K562 (cell line): ENCODE measurements at regions of chr3 and their contacts with region 1.

Region 1: GRCh38 chr3:184040010-184040409 is 8.5 kb downstream of the HTR3D start:
- DNase-seq: peak; percentile 22 to 53 (median 34)
- ATAC-seq: peak; percentile 94
- H3K4me3 ChIP-seq: no peak overlapping the region
- H3K27ac ChIP-seq: no peak overlapping the region
- H3K4me1 ChIP-seq: no peaks in the 10 kb centered on the region
- H3K27me3 ChIP-seq: peaks cover 0 to 5% of the 10 kb centered on the region in 2 experiments; a peak in 2 of 5 replicates
- CTCF ChIP-seq: peak; percentile 66 to 79 (median 68)
- EP300 ChIP-seq: no peak
- POLR2A ChIP-seq: no peak
- RAD21 ChIP-seq: peak; percentile 79 to 82

Region 2: DNA sequence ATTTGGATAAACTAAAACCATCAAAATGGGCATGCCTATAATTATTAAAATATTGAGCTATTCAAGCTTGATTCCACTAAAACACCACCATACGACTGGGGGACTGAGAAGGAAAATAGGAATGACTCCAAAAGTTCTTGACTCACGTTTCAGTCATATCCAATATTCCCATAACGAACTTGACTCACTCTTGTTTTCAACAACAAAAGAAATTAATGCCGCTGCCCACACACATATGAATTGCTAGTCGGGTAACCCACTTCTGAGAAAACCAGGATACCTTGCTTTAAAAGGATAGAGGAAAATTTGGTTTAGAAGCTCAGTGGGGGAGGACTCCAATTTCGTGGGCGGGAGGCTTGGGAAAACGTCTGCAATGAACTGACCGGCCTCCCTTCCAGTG is 18.0 kb after region 1 on chr3:
- CTCF ChIA-PET with region 1: no interaction called
- POLR2A ChIA-PET with region 1: interaction called, 12 read pairs
- in situ Hi-C with region 1: no loop called
- intact Hi-C with region 1: no loop called
- DNase-seq: no peak
- ATAC-seq: no peak
- H3K4me3 ChIP-seq: no peak overlapping the region
- H3K27ac ChIP-seq: no peak overlapping the region
- H3K4me1 ChIP-seq: no peaks in the 10 kb centered on the region; a peak in 2 of 5 replicates
- H3K27me3 ChIP-seq: peaks cover 14 to 29% of the 10 kb centered on the region in 2 experiments
- CTCF ChIP-seq: no peak
- EP300 ChIP-seq: no peak
- POLR2A ChIP-seq: no peak
- RAD21 ChIP-seq: no peak

Region 3: DNA sequence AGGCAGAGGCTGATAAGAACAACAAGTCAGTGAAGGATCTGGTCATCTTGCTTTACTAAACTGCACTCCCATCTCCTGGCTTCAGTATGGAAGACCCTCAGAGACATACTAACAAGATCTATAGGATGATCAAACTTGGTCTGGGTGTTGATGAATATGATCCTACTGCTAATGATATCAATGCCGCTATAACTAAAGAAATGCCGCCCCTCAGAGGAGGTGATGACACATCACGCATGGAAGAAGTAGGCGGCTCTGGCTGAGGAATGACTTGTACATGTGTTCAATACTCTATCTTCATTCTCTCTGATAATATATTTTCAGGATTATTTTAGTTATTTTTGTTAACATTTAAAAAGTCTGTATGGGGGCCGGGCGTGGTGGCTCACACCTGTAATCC is 77.6 kb after region 1 on chr3:
- CTCF ChIA-PET with region 1: no interaction called
- POLR2A ChIA-PET with region 1: no interaction called
- in situ Hi-C with region 1: no loop called
- intact Hi-C with region 1: loop called (anchors 5 kb)
- DNase-seq: peak in 1 of 4 experiments; percentile 20
- ATAC-seq: peak; percentile 72
- H3K4me3 ChIP-seq: no peak overlapping the region
- H3K27ac ChIP-seq: no peak overlapping the region
- H3K4me1 ChIP-seq: no peaks in the 10 kb centered on the region; a peak in 1 of 5 replicates
- H3K27me3 ChIP-seq: peaks cover 0 to 4% of the 10 kb centered on the region in 2 experiments; a peak in 1 of 5 replicates
- CTCF ChIP-seq: peak in 2 of 3 experiments; percentile 19 to 51; a peak in 4 of 6 replicates
- EP300 ChIP-seq: no peak
- POLR2A ChIP-seq: no peak
- RAD21 ChIP-seq: peak; percentile 52 to 78

Region 4: GRCh38 chr3:185308126-185308754 is 1268.2 kb after region 1 on chr3:
- CTCF ChIA-PET with region 1: no interaction called
- POLR2A ChIA-PET with region 1: no interaction called
- in situ Hi-C with region 1: no loop called
- intact Hi-C with region 1: no loop called
- DNase-seq: peak; percentile 62 to 79 (median 62)
- ATAC-seq: peak; percentile 85
- H3K4me3 ChIP-seq: no peak overlapping the region
- H3K27ac ChIP-seq: no peak overlapping the region
- H3K4me1 ChIP-seq: no peaks in the 10 kb centered on the region
- H3K27me3 ChIP-seq: no peaks in the 10 kb centered on the region
- CTCF ChIP-seq: peak; percentile 77 to 86 (median 82)
- EP300 ChIP-seq: no peak
- POLR2A ChIP-seq: no peak
- RAD21 ChIP-seq: peak; percentile 71 to 85